Activated CD4-positive, alpha-beta memory T cell treated with anti-CD3 and anti-CD28 coated beads for 36 hours (primary cell): ENCODE measurements at regions of chr21 and their contacts with region 1.

Region 1: GRCh38 chr21:35051287-35051818 is 2.3 kb upstream of the RUNX1 start:
- DNase-seq: peak; percentile 91
- H3K4me3 Mint-ChIP-seq: peak overlapping the region; percentile 36
- H3K27ac Mint-ChIP-seq: peak overlapping the region; percentile 99
- H3K4me1 Mint-ChIP-seq: peaks cover 53% of the 10 kb centered on the region
- H3K27me3 Mint-ChIP-seq: no peaks in the 10 kb centered on the region

Region 2: GRCh38 chr21:34707876-34708325 is 343.5 kb before region 1 on chr21:
- CTCF ChIA-PET with region 1: interaction called, 3 read pairs
- POLR2A ChIA-PET with region 1: interaction called, 3 read pairs
- intact Hi-C with region 1: loop called (anchors 5 kb)
- DNase-seq: peak; percentile 85
- H3K4me3 Mint-ChIP-seq: no peak overlapping the region
- H3K27ac Mint-ChIP-seq: peak overlapping the region; percentile 15
- H3K4me1 Mint-ChIP-seq: peaks cover 20% of the 10 kb centered on the region
- H3K27me3 Mint-ChIP-seq: peaks cover 41% of the 10 kb centered on the region

Region 3: DNA sequence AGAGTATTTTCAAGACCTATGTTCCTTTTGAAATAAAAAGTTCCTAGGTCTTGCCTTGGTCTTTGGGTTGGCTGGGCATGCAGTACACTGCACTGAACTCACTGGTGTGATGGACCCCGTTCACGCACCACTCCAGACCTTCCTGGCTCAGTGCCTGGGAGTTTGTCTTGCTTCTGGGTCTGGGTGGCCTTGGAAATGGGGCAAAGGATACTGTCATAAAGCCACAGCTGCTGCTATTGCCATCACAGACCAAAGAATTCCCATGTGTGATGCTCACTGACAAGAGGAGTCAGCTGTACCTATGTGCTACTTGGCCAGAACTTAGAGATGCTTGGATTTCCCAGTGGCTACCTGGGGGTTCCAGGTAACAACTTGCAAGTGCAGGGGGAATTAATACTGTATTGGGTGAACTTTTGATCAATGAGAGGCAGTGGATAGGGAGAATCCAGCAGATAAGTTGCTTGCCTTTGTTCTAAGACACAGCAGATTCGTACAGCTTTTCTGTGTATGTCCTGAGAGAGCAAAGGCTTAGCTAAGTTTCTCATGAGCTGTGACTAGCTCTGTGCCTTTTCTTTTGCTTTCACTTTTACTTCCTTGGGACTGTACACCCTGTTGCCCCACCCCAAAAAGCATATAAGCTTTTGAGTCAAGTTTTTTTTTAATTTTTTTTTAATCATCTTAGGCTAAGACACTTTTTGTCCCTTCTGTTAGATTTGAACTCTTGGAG is 117.6 kb before region 1 on chr21:
- CTCF ChIA-PET with region 1: interaction called, 8 read pairs
- POLR2A ChIA-PET with region 1: interaction called, 15 read pairs
- intact Hi-C with region 1: loop called (anchors 2 kb)
- DNase-seq: peak; percentile 43
- H3K4me3 Mint-ChIP-seq: peak overlapping the region; percentile 77
- H3K27ac Mint-ChIP-seq: peak overlapping the region; percentile 97
- H3K4me1 Mint-ChIP-seq: peaks cover 83% of the 10 kb centered on the region
- H3K27me3 Mint-ChIP-seq: no peaks in the 10 kb centered on the region

Region 4: DNA sequence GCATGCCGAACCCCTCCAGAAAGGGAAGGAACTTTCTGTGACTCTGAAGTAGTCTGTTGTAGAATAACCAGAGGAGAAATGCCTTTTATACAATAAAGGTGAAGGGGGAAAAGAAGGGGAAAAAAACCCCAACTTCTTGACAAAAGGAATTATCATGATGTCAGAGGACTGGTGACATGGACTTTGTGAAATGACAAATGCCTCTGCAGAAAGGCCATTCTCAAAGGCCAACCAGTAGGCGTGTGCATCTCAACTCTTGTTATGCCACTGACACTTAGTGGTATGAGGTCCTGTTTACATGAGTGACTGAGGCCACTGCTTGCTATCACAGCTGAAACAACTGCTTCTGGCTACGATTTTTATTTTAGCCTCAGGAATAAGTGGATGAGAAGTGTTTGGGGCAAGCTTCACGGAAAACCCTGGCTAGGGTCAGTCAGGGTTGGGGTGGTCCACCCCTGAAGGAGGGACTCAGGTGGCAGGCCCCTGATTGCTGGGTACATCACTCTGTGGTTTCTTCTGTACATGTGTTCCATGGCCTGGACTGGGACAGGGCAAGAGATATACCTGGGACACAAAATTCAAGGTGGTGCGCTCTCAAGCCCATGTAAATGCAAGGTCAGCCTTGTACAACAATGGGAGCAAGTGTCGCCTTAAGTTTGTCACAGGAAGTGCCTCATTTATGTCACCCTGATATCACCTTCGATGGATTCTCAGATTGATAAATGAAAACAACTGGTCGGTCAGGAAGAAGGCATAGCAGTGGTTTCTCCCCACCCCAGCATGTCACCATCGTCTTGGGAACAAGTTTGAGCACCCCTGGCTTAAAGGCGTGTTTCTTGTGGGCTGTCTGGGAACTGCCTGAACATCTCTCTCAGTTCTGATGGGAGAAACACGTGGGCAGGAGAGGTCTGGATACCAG is 14.6 kb before region 1 on chr21:
- CTCF ChIA-PET with region 1: interaction called, 5 read pairs
- POLR2A ChIA-PET with region 1: interaction called, 25 read pairs
- intact Hi-C with region 1: no loop called
- DNase-seq: peak; percentile 53
- H3K4me3 Mint-ChIP-seq: peak overlapping the region; percentile 62
- H3K27ac Mint-ChIP-seq: peak overlapping the region; percentile 91
- H3K4me1 Mint-ChIP-seq: peaks cover 95% of the 10 kb centered on the region
- H3K27me3 Mint-ChIP-seq: no peaks in the 10 kb centered on the region

Region 5: DNA sequence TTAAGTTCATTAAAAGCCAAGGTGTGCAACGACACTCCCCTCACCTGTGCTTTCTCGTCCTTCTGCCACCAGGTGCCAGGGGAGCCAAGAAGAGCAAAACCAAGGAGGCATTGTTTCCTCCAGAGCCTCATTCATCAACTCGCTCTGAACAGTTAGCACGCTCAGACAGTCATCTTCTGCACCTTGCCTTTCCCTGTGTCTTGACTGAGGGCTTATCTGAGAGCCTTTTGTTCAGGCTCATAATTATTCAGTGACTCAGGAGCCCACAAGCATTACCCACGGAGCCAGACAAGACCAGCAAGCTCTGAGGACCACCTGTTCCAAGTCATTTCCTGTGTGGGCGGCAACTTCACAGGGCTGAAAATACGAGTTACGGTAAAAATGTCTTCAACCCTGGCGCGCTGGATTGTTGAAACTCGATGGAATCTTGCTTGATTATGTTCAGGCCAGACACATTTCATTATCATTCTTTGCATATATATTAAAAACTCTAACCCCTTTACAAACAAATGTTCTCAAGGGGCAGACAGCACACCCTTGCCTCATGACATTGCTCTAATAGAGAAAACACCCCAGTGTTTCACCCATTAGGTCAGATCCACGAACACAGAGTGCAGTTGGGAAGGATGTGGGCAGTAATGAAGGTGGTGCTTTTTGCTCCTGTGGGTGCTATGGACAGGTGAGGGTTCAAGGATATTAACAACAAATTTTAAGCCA is 87.5 kb after region 1 on chr21:
- CTCF ChIA-PET with region 1: interaction called, 5 read pairs
- POLR2A ChIA-PET with region 1: interaction called, 10 read pairs
- intact Hi-C with region 1: loop called (anchors 1 kb)
- DNase-seq: peak; percentile 79
- H3K4me3 Mint-ChIP-seq: peak overlapping the region; percentile 68
- H3K27ac Mint-ChIP-seq: peak overlapping the region; percentile 90
- H3K4me1 Mint-ChIP-seq: peaks cover 29% of the 10 kb centered on the region
- H3K27me3 Mint-ChIP-seq: no peaks in the 10 kb centered on the region

Region 6: DNA sequence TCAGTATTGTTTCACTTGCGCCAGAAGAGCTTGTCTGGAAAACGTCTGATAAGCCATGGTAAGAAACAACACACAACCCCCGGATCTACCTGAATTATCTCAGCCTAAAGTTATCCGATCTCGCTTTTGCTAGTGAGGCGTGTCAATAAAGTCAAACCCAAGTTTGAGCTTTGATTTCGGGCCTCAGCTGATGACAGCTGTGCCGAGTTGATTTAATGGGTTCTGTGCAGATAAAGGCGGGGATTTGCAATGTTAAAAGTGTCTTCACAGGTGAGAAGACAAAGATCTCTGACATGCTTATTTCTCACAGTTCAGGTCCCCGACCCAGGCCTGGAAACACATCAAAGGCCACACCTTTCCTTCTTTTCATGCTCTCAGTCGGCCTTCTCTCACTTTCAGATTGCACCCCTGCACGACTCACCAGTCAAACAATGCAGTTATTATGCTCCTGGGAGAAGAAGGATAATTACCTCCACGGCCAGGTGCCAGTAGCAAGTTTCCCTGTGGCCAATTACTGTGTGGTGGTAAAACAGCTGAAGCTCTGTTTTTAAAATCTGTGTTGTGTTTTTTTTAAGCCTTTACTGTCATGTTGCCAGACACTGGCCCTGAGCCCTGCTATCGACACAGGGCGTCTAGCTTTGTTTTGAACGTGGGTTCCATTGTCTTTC is 243.0 kb after region 1 on chr21:
- CTCF ChIA-PET with region 1: no interaction called
- POLR2A ChIA-PET with region 1: no interaction called
- intact Hi-C with region 1: no loop called
- DNase-seq: no peak
- H3K4me3 Mint-ChIP-seq: no peak overlapping the region
- H3K27ac Mint-ChIP-seq: no peak overlapping the region
- H3K4me1 Mint-ChIP-seq: peaks cover 7% of the 10 kb centered on the region
- H3K27me3 Mint-ChIP-seq: peaks cover 2% of the 10 kb centered on the region

Region 7: DNA sequence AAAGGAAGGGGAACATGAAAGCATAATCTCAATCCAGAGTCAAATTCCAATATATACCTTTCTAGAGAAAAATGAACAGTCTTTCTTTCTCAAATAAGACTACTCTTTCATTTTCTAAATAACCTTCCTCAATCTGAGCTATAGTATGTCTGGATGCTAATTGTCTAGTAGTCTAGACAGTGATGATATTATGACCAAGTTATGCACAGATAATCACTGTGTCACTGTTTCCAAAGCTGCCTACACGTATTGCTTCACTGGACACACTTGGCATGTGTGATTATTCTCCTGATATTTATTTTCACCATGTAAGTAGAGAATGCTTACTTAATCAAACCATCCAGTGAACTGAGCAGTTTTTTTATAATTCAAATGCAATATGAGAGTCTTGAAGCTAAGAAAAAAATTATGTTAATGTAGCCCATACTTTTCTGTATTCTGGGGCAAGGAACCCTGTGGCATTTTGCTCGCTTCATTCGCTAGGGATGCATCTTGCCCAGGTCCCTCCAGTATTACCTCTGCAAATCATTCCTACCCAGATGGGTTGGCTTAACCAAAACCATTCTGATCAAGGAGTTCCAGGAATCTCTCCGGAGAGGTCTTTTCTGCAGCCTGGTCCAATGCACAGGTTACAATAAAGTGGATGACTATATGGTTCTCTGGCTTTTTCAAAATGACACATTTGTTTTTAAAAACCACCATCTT is 300.9 kb after region 1 on chr21:
- CTCF ChIA-PET with region 1: interaction called, 4 read pairs
- POLR2A ChIA-PET with region 1: interaction called, 13 read pairs
- intact Hi-C with region 1: no loop called
- DNase-seq: no peak
- H3K4me3 Mint-ChIP-seq: no peak overlapping the region
- H3K27ac Mint-ChIP-seq: peak overlapping the region; percentile 13
- H3K4me1 Mint-ChIP-seq: peaks cover 32% of the 10 kb centered on the region
- H3K27me3 Mint-ChIP-seq: peaks cover 4% of the 10 kb centered on the region

Region 8: DNA sequence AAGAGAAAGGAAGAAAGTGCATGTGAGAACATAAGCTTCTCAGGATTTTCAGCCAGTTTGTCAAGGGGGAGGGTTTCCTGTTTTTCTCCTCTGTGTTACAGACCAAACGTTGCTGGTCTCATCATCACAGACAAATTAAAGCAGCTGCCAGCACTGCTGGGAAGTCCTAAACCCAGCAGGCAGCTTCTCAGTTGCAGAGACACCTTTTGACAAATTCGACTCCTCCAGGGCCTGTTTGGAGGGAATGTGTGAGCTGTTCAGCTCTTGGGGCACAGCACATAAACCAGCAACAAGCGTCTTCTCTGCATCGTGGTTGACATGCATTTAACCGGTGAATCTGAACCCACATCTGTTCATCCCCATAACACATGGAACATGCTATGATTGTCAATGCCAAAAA is 452.3 kb after region 1 on chr21:
- CTCF ChIA-PET with region 1: no interaction called
- POLR2A ChIA-PET with region 1: no interaction called
- intact Hi-C with region 1: no loop called
- DNase-seq: no peak
- H3K4me3 Mint-ChIP-seq: no peak overlapping the region
- H3K27ac Mint-ChIP-seq: no peak overlapping the region
- H3K4me1 Mint-ChIP-seq: peaks cover 19% of the 10 kb centered on the region
- H3K27me3 Mint-ChIP-seq: peaks cover 8% of the 10 kb centered on the region

Region 9: DNA sequence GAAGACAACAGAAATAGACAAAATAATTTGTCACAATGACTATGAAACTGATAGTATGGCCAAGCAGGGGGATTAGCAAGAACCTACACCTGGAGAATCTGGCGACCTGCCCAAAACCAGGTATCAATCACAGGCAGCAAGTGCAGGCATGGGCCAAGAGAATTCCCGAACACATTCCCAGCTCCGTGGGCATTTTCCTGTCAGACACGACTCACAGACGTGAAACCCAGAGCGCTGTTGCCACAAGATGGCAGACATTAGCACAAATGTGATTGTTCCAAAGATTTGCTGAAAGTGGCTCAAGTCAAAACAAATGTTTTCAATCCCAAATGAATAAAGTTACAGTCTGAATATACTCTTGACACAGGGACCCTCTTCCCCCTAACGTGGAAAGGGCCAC is 1878.3 kb after region 1 on chr21:
- CTCF ChIA-PET with region 1: no interaction called
- POLR2A ChIA-PET with region 1: no interaction called
- intact Hi-C with region 1: no loop called
- DNase-seq: no peak
- H3K4me3 Mint-ChIP-seq: no peak overlapping the region
- H3K27ac Mint-ChIP-seq: no peak overlapping the region
- H3K4me1 Mint-ChIP-seq: no peaks in the 10 kb centered on the region
- H3K27me3 Mint-ChIP-seq: no peaks in the 10 kb centered on the region